ENCODE measurements at regions of chr7 and their contacts with region 1.

Region 1: GRCh38 chr7:155598810-155599210 is 45.7 kb upstream of the RBM33 start:
- DNase-seq: peak; percentile 88
- H3K4me3 Mint-ChIP-seq: no peak overlapping the region
- H3K27ac Mint-ChIP-seq: no peak overlapping the region
- H3K4me1 Mint-ChIP-seq: peaks cover 12% of the 10 kb centered on the region
- H3K27me3 Mint-ChIP-seq: peaks cover 21% of the 10 kb centered on the region

Region 2: GRCh38 chr7:155533827-155534690 is 64.8 kb before region 1 on chr7:
- CTCF ChIA-PET with region 1: no interaction called
- POLR2A ChIA-PET with region 1: no interaction called
- intact Hi-C with region 1: no loop called
- DNase-seq: peak; percentile 50
- H3K4me3 Mint-ChIP-seq: peak overlapping the region; percentile 47
- H3K27ac Mint-ChIP-seq: no peak overlapping the region
- H3K4me1 Mint-ChIP-seq: peaks cover 13% of the 10 kb centered on the region
- H3K27me3 Mint-ChIP-seq: peaks cover 65% of the 10 kb centered on the region

Region 3: DNA sequence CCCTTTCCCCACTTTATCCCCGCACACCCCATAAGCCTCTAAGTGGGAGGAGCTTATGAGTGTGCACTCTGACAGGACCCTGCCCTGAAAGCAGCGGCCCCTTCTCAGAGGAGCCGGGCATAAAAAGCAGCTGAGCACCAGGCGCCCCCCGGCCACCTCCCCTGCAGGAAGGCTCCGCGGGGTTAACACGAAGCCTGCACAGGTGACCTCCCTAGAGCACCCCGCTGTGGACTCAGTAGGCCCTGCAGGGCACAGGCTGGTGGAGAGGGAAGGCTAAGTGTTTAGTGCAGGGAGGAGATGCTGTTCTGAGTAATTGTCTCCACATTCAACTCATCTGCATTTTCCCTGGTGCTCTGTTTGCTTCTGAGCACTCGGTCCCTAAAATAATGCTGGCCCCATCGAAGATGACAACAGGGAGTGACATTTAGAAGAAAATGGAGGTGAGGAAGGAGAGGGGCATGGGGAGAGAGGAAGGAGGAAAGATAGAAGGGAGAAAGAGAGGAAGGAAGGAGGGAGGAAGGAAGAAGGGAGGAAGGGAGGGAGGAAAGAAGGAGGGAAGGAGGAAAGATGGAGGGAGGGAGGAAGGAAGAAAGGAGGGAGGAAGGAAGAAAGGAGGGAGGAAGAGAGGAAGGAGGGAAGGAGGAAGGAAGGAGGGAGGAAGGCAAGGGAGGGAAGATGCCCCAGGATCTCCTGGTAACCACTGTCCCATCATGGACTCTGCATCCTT is 27.1 kb before region 1 on chr7:
- CTCF ChIA-PET with region 1: no interaction called
- POLR2A ChIA-PET with region 1: no interaction called
- intact Hi-C with region 1: no loop called
- DNase-seq: no peak
- H3K4me3 Mint-ChIP-seq: no peak overlapping the region
- H3K27ac Mint-ChIP-seq: no peak overlapping the region
- H3K4me1 Mint-ChIP-seq: no peaks in the 10 kb centered on the region
- H3K27me3 Mint-ChIP-seq: peaks cover 3% of the 10 kb centered on the region

Region 4: GRCh38 chr7:155584763-155585531 is 13.9 kb before region 1 on chr7:
- CTCF ChIA-PET with region 1: interaction called, 15 read pairs
- POLR2A ChIA-PET with region 1: no interaction called
- intact Hi-C with region 1: no loop called
- DNase-seq: no peak
- H3K4me3 Mint-ChIP-seq: no peak overlapping the region
- H3K27ac Mint-ChIP-seq: no peak overlapping the region
- H3K4me1 Mint-ChIP-seq: peaks cover 7% of the 10 kb centered on the region
- H3K27me3 Mint-ChIP-seq: peaks cover 30% of the 10 kb centered on the region

Region 5: GRCh38 chr7:155644178-155644970 is 45.6 kb after region 1 on chr7 and contains the start of gene RBM33:
- CTCF ChIA-PET with region 1: interaction called, 8 read pairs
- POLR2A ChIA-PET with region 1: no interaction called
- intact Hi-C with region 1: loop called (anchors 2 kb)
- DNase-seq: peak; percentile 87
- H3K4me3 Mint-ChIP-seq: peak within 1 kb of the TSS; percentile 89
- H3K27ac Mint-ChIP-seq: peak within 1 kb of the TSS; percentile 94
- H3K4me1 Mint-ChIP-seq: peaks cover 40% of the 10 kb centered on the region
- H3K27me3 Mint-ChIP-seq: no peaks in the 10 kb centered on the region
- total RNA-seq, gene RBM33: 57.7 to 65.3 TPM

Region 6: DNA sequence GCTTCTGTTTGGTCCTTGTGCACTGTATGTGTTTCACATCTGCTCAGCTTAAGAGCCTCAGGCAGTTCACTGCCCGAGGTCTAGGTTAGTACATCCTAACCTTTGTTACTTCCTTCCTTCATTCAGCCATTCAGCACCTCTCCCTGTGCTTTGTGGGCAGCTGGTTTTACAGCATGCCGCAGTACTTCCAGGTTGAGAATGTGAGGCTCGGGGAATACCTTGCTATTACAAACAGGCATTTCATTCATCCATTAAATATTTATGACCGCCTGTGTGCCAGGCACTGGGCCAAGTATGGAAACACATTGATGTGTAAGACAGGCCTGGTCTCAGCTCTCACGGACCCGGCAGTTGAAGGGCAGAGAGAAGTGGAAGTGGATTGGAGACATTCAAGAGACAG is 131.0 kb after region 1 on chr7:
- CTCF ChIA-PET with region 1: interaction called, 58 read pairs
- POLR2A ChIA-PET with region 1: interaction called, 4 read pairs
- intact Hi-C with region 1: no loop called
- DNase-seq: no peak
- H3K4me3 Mint-ChIP-seq: no peak overlapping the region
- H3K27ac Mint-ChIP-seq: no peak overlapping the region
- H3K4me1 Mint-ChIP-seq: peaks cover 31% of the 10 kb centered on the region
- H3K27me3 Mint-ChIP-seq: no peaks in the 10 kb centered on the region

Region 7: DNA sequence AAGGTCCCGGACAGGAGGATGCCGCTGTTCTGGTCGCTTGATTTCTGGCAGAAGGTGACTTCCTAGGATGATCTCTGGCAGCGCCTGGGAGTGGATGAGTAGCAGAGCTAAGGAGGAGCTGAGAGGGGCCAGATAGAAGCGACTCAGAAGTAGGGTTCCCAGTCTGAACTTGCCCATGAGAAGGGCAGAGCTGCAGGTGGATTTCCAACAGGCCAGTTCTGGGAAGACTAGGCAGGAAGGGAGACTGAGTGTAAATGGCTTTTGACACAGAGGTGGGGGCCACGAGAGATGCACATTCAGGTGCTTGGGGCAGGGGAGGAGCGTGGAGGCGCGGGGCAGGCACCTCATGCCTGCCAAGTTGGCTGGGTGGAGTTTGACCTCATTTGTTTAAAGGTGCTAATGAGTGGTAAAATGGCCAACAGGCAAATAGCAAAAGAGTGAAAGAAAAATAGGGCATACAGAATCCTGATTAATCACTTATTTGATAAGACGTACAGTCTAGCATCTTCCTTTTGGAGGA is 154.7 kb after region 1 on chr7:
- CTCF ChIA-PET with region 1: interaction called, 10 read pairs
- POLR2A ChIA-PET with region 1: no interaction called
- intact Hi-C with region 1: no loop called
- DNase-seq: no peak
- H3K4me3 Mint-ChIP-seq: no peak overlapping the region
- H3K27ac Mint-ChIP-seq: peak overlapping the region; percentile 59
- H3K4me1 Mint-ChIP-seq: peaks cover 72% of the 10 kb centered on the region
- H3K27me3 Mint-ChIP-seq: no peaks in the 10 kb centered on the region

Region 8: GRCh38 chr7:155769701-155770100 is 170.9 kb after region 1 on chr7:
- CTCF ChIA-PET with region 1: interaction called, 227 read pairs
- POLR2A ChIA-PET with region 1: no interaction called
- intact Hi-C with region 1: loop called (anchors 1 kb)
- DNase-seq: no peak
- H3K4me3 Mint-ChIP-seq: no peak overlapping the region
- H3K27ac Mint-ChIP-seq: peak overlapping the region; percentile 18
- H3K4me1 Mint-ChIP-seq: peaks cover 7% of the 10 kb centered on the region
- H3K27me3 Mint-ChIP-seq: no peaks in the 10 kb centered on the region